ENCODE measurements at regions of chr3 and their contacts with region 1.

Region 1: GRCh38 chr3:51508255-51508654 is 8.4 kb upstream of the DCAF1 start:
- DNase-seq: no peak
- ATAC-seq: no peak
- H3K4me3 ChIP-seq: no peak overlapping the region
- H3K4me3 Mint-ChIP-seq: no peak overlapping the region
- H3K27ac ChIP-seq: no peak overlapping the region
- H3K27ac Mint-ChIP-seq: no peak overlapping the region
- H3K4me1 ChIP-seq: no peaks in the 10 kb centered on the region
- H3K4me1 Mint-ChIP-seq: peaks cover 4% of the 10 kb centered on the region
- H3K27me3 ChIP-seq: no peaks in the 10 kb centered on the region
- H3K27me3 Mint-ChIP-seq: no peaks in the 10 kb centered on the region
- CTCF ChIP-seq: no peak

Region 2: DNA sequence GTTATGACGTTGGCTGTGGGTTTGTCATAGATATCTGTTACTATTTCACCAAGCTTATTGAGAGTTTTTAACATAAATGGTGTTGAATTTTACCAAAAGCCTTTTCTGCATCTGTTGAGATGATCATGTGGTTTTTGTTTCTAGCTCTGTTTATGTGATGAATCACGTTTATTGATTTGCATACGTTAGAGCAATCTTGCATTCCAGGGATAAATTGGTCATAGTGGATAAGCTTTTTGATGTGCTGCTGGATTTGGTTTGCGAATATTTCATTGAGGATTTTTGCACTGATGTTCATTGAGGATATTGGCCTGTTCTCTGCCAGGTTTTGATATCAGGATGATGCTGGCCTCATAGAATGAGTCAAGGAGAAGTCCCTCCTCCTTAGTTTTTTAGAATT is 715.7 kb before region 1 on chr3:
- CTCF ChIA-PET with region 1: no interaction called
- POLR2A ChIA-PET with region 1: no interaction called
- intact Hi-C with region 1: no loop called
- DNase-seq: no peak
- ATAC-seq: no peak
- H3K4me3 ChIP-seq: no peak overlapping the region
- H3K4me3 Mint-ChIP-seq: no peak overlapping the region
- H3K27ac ChIP-seq: no peak overlapping the region
- H3K27ac Mint-ChIP-seq: no peak overlapping the region
- H3K4me1 ChIP-seq: no peaks in the 10 kb centered on the region
- H3K4me1 Mint-ChIP-seq: no peaks in the 10 kb centered on the region
- H3K27me3 ChIP-seq: no peaks in the 10 kb centered on the region
- H3K27me3 Mint-ChIP-seq: peaks cover 13% of the 10 kb centered on the region
- CTCF ChIP-seq: no peak

Region 3: GRCh38 chr3:51408813-51409212 is 99.4 kb before region 1 on chr3:
- CTCF ChIA-PET with region 1: no interaction called
- POLR2A ChIA-PET with region 1: no interaction called
- intact Hi-C with region 1: no loop called
- DNase-seq: no peak
- ATAC-seq: no peak
- H3K4me3 ChIP-seq: no peak overlapping the region
- H3K4me3 Mint-ChIP-seq: no peak overlapping the region
- H3K27ac ChIP-seq: no peak overlapping the region
- H3K27ac Mint-ChIP-seq: no peak overlapping the region
- H3K4me1 ChIP-seq: no peaks in the 10 kb centered on the region
- H3K4me1 Mint-ChIP-seq: peaks cover 9% of the 10 kb centered on the region
- H3K27me3 ChIP-seq: no peaks in the 10 kb centered on the region
- H3K27me3 Mint-ChIP-seq: no peaks in the 10 kb centered on the region
- CTCF ChIP-seq: no peak

Region 4: DNA sequence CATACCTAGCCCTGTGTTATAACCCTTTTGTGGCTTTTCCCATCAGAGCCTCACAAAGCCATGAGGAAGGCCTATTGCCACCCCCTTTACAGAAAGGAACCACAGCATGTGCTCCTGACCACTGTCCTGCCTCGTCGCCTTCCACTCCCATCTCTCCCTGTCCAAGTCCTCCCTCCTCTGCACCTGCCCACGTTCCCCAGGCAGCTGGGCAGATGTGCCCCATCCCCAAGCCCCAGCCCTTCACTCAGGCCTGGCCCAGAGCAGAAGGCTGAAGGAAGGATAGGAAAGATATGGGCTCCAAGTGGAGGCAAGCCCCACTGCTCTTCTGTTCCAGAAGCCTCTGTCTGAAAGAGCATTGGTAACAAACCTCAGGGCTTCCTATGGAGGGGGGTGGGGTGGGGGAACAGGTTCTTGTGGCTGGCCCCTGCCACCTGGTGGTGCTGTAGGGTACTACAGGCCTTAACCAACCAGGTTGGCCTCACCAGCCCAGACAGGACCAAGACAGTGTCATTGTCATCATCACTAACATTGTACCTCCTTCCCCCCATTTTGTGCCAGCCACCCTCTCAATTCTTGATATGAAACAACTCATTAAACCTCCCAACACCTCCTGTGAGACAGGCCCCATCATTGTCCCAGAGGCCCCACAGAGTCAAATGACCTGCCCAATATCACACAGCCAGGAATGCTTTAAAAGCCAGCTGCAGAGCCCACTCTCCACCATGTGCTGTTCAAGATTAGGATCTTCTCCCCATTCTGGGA is 636.0 kb after region 1 on chr3:
- CTCF ChIA-PET with region 1: no interaction called
- POLR2A ChIA-PET with region 1: no interaction called
- intact Hi-C with region 1: loop called in 1 of 2 experiments (anchors 5 kb)
- DNase-seq: peak; percentile 74 to 92 (median 90)
- ATAC-seq: peak; percentile 100
- H3K4me3 ChIP-seq: no peak overlapping the region
- H3K4me3 Mint-ChIP-seq: no peak overlapping the region
- H3K27ac ChIP-seq: no peak overlapping the region
- H3K27ac Mint-ChIP-seq: peak overlapping the region; percentile 27
- H3K4me1 ChIP-seq: peaks cover 7% of the 10 kb centered on the region
- H3K4me1 Mint-ChIP-seq: peaks cover 7% of the 10 kb centered on the region
- H3K27me3 ChIP-seq: no peaks in the 10 kb centered on the region
- H3K27me3 Mint-ChIP-seq: no peaks in the 10 kb centered on the region
- CTCF ChIP-seq: peak; percentile 92

Region 5: DNA sequence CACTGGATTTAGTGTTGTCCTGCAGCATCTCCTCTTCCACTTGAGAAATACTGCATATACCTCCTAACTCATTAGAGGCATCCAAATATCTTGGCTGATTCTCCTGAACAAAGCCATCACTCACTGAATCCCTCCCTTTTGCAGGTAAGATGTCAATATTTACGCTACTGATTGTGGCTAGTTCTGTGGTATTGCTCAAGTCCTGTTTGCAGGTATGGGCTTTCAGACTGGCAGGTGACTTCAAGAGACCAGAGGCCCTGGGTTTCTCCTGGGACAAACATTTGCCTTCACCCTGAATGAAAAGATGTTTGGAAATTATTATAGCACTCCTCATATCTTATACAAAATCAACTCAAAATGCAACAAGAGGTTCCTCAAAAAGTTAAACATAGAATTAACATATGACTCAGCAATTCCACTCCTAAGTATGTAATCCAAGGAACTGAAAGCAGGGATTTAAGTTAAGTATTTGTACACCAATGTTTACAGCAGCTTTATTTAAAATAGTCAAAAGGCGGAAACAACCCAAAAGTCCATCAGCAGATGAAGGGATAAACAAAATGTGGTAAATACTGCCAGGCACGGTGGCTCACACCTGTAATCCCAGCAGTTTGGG is 1243.9 kb after region 1 on chr3:
- CTCF ChIA-PET with region 1: no interaction called
- POLR2A ChIA-PET with region 1: no interaction called
- intact Hi-C with region 1: no loop called
- DNase-seq: no peak
- ATAC-seq: no peak
- H3K4me3 ChIP-seq: no peak overlapping the region
- H3K4me3 Mint-ChIP-seq: no peak overlapping the region
- H3K27ac ChIP-seq: no peak overlapping the region
- H3K27ac Mint-ChIP-seq: peak overlapping the region; percentile 14
- H3K4me1 ChIP-seq: no peaks in the 10 kb centered on the region
- H3K4me1 Mint-ChIP-seq: no peaks in the 10 kb centered on the region
- H3K27me3 ChIP-seq: no peaks in the 10 kb centered on the region
- H3K27me3 Mint-ChIP-seq: no peaks in the 10 kb centered on the region
- CTCF ChIP-seq: no peak

Measured in CD8-positive, alpha-beta T cell (primary cell).